Endothelial cell of umbilical vein (primary cell): ENCODE measurements at regions of chr9 and their contacts with region 1.

Region 1: GRCh38 chr9:134443168-134444037 is 117.1 kb downstream of the RXRA start:
- DNase-seq: peak; percentile 70
- H3K4me3 ChIP-seq: no peak overlapping the region
- H3K27ac ChIP-seq: no peak overlapping the region
- H3K4me1 ChIP-seq: peaks cover 6% of the 10 kb centered on the region
- H3K27me3 ChIP-seq: peaks cover 0 to 4% of the 10 kb centered on the region in 2 experiments
- CTCF ChIP-seq: peak; percentile 98 to 99
- POLR2A ChIP-seq: no peak

Region 2: DNA sequence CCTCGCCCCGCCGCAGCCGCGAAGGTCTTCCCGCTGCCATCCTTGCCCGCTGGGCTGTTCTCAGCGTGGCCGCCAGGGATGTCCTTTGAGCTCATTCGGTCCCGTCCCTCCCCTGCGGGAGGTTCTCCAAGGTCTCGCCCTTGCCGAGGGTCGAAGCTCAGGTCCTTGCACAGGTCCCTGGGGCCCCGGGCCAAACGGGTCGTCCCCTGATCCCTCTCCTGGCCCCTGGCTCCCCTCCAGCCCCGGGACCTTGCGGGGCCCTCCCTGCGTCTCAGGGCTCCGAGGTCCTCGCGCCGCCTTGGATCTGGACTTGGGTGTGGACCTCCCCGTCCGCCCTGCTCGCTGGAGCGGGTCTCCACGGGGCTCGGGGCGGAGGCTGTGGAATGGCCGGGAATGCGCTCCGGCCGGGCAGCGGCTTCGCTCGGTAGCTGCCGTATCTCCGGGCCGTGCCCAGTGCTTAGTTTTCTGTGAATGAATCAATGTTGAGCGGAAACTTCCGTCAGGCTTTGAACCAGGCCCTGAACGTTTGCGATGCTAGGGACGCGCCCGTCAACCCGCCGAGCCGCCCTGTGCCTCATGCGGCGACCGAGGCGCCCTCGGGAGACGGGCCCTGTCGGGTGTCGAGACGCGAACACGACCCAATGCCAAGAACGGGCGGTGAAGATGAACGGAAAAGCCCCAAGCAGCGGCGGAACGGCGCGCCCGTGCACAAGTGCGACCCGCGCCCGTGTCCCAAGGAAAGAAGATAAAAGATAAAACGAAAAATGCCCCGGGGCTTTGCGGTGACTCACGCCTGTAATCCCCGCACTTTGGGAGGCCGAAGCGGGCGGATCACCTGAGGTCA is 279.8 kb before region 1 on chr9:
- CTCF ChIA-PET with region 1: interaction called, 133 read pairs
- POLR2A ChIA-PET with region 1: interaction called, 4 read pairs
- dilution Hi-C with region 1: no loop called
- intact Hi-C with region 1: no loop called
- DNase-seq: peak; percentile 62
- H3K4me3 ChIP-seq: peak overlapping the region; percentile 6 to 30 (median 25)
- H3K27ac ChIP-seq: peak overlapping the region; percentile 35
- H3K4me1 ChIP-seq: peaks cover 4% of the 10 kb centered on the region
- H3K27me3 ChIP-seq: no peaks in the 10 kb centered on the region
- CTCF ChIP-seq: peak; percentile 34 to 68
- POLR2A ChIP-seq: no peak

Region 3: DNA sequence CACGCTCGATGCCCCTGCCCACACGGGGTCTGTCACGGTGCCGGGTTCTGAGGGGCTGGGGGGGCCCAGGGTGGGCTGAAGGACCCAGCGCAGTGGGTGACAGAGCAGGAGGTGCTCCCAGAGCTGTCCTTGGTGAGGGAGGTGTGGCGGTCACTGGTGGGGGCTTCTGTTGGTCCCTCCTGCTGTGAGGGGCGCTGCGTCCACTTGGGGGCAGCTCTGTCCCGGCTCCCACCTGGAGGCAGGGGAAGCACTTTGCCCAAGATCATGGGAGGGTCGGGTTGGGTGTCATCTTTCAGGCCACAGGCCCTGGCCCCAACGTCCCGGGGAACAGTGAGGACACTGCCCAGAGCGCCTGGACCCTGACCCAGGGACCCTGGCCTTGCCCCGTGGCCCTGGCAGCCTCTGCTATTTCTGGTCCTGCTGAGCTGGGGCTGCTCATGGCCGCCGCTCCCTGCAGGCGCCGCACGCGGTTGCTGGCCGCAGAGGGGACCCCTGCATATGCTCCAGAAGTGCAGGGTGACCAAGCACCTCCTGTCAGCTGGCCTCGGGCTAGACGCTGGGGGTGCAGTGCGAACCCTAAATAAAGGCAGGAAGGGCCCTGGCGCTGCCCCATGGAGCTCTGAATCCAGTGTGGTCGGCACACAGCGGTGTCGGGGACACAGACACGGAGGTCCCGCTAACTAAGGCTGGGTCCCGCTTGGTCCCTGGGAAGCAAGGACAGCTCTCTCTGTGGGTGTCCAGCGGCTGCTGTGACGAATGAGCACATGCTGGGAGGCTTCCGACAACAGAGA is 267.4 kb before region 1 on chr9:
- CTCF ChIA-PET with region 1: interaction called, 133 read pairs
- POLR2A ChIA-PET with region 1: interaction called, 5 read pairs
- dilution Hi-C with region 1: no loop called
- intact Hi-C with region 1: no loop called
- DNase-seq: no peak
- H3K4me3 ChIP-seq: no peak overlapping the region
- H3K27ac ChIP-seq: no peak overlapping the region
- H3K4me1 ChIP-seq: no peaks in the 10 kb centered on the region
- H3K27me3 ChIP-seq: peaks cover 2 to 3% of the 10 kb centered on the region in 2 experiments
- CTCF ChIP-seq: no peak
- POLR2A ChIP-seq: no peak

Region 4: GRCh38 chr9:134325817-134326723 is 117.3 kb before region 1 on chr9 and contains the start of gene RXRA:
- CTCF ChIA-PET with region 1: interaction called, 12 read pairs
- POLR2A ChIA-PET with region 1: no interaction called
- dilution Hi-C with region 1: no loop called
- intact Hi-C with region 1: loop called (anchors 1 kb)
- DNase-seq: peak; percentile 56
- H3K4me3 ChIP-seq: peak within 1 kb of the TSS; percentile 59 to 84 (median 75)
- H3K27ac ChIP-seq: peak within 1 kb of the TSS; percentile 82
- H3K4me1 ChIP-seq: peaks cover 21% of the 10 kb centered on the region
- H3K27me3 ChIP-seq: no peaks in the 10 kb centered on the region
- CTCF ChIP-seq: no peak
- POLR2A ChIP-seq: peak; percentile 80
- total RNA-seq, gene RXRA: 37.4 and 38.9 TPM in 2 replicates

Region 5: GRCh38 chr9:134381671-134382516 is 61.5 kb before region 1 on chr9:
- CTCF ChIA-PET with region 1: interaction called, 10 read pairs
- POLR2A ChIA-PET with region 1: interaction called, 3 read pairs
- dilution Hi-C with region 1: no loop called
- intact Hi-C with region 1: no loop called
- DNase-seq: peak; percentile 42
- H3K4me3 ChIP-seq: no peak overlapping the region
- H3K27ac ChIP-seq: no peak overlapping the region
- H3K4me1 ChIP-seq: peaks cover 24% of the 10 kb centered on the region
- H3K27me3 ChIP-seq: no peaks in the 10 kb centered on the region
- CTCF ChIP-seq: peak; percentile 21 to 45
- POLR2A ChIP-seq: no peak

Region 6: DNA sequence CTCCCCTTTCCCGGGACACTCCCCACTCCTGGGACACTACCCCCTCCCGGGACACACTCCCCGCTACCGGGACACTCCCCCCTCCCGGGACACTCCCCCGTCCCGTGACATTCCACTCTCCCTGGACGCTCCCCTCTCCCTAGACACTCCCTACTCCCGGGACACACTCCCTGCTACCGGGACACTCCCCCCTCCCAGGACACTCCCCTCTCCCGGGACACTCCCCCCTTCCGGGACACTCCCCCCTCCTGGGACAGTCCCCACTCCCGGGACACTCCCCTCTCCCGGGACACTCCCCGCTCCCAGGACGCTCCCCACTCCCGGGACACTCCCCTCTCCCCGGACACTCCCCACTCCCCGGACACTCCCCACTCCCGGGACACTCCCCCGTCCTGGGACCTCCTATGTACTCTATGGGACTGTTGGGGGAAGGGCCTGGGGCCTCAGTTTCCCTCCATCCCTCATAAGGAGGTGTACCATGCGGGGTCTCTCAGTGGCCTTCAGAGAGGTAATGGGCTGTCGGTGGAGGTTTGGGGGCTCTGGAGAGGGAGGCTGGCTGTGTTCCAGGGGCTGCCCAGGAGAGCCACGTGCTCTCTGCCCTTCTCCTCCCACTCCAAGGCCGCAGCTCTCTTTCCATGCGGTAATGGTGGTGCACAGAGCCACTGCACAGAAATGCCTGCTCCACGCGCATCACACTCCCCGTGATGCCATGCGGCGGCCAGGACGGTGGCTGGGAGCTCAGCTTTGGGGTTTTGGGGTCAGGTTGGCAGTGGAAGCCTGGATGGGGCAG is 20.9 kb before region 1 on chr9:
- CTCF ChIA-PET with region 1: no interaction called
- POLR2A ChIA-PET with region 1: no interaction called
- dilution Hi-C with region 1: no loop called
- intact Hi-C with region 1: no loop called
- DNase-seq: no peak
- H3K4me3 ChIP-seq: no peak overlapping the region
- H3K27ac ChIP-seq: no peak overlapping the region
- H3K4me1 ChIP-seq: no peaks in the 10 kb centered on the region
- H3K27me3 ChIP-seq: no peaks in the 10 kb centered on the region
- CTCF ChIP-seq: no peak
- POLR2A ChIP-seq: no peak

Region 7: DNA sequence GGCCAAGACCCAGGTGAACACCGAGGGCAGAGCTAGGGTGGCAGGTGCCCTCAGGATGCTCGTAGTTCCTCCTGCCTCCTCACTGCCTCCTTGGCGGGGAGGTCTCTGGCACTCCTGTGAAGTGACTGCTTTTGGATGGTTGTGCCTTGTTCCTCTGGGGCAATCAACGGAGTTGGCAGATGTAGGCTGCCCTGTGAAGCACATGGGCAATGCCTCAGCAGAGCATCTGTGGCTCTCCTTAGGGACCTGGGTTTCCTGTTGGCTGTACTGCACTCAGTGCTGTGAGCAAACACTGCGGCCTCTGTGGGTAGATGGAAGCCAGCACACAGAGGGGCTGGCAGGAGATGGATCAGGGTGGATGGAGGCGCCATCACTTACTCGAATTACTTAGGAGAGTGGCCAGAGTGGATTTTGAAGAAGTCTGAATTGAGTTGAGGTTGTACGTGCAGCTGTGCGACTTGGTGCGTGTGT is 126.8 kb after region 1 on chr9:
- CTCF ChIA-PET with region 1: no interaction called
- POLR2A ChIA-PET with region 1: no interaction called
- dilution Hi-C with region 1: no loop called
- intact Hi-C with region 1: no loop called
- DNase-seq: no peak
- H3K4me3 ChIP-seq: no peak overlapping the region
- H3K27ac ChIP-seq: no peak overlapping the region
- H3K4me1 ChIP-seq: no peaks in the 10 kb centered on the region
- H3K27me3 ChIP-seq: no peaks in the 10 kb centered on the region
- CTCF ChIP-seq: no peak
- POLR2A ChIP-seq: no peak

Region 8: DNA sequence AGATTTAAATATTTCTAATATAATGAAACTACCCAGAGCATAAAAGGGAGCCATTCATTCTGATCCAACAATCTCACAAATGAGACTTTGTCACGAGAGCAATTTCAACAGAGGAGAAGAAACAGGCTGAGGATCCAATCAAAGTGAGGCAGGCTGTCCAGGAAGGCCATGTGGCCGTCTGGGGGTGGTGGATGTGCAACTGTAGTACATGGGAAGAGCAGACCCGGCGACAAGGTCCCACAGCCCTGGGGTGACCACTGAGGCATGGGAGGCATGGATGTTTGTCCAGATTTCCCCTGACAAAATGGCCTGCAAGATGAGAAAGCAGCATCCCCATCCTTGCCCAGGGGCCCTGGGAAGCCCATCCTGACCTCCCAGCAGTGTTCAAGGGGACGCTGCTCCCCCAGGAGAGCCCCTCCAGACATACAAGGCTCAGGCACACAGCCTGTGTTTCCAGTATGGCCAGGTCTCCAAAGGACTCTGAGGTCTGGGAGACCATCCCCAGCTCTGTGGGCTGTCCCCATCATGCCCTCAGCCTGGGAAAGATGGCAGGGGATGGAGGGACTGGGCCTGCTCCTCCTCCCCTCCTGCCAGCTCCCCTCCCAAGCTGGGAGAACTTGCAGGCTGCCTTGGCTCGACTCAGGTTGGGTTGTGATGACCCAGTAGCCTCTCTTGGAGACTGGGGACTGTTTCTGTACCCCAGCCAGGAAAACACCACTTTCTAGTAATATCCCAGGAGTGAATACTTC is 409.7 kb after region 1 on chr9:
- CTCF ChIA-PET with region 1: no interaction called
- POLR2A ChIA-PET with region 1: no interaction called
- dilution Hi-C with region 1: no loop called
- intact Hi-C with region 1: no loop called
- DNase-seq: no peak
- H3K4me3 ChIP-seq: no peak overlapping the region
- H3K27ac ChIP-seq: no peak overlapping the region
- H3K4me1 ChIP-seq: no peaks in the 10 kb centered on the region
- H3K27me3 ChIP-seq: no peaks in the 10 kb centered on the region
- CTCF ChIP-seq: no peak
- POLR2A ChIP-seq: no peak

Region 9: GRCh38 chr9:136093995-136094881 is 1650.8 kb after region 1 on chr9:
- CTCF ChIA-PET with region 1: no interaction called
- POLR2A ChIA-PET with region 1: no interaction called
- dilution Hi-C with region 1: no loop called
- intact Hi-C with region 1: loop called (anchors 5 kb)
- DNase-seq: peak; percentile 33
- H3K4me3 ChIP-seq: peak overlapping the region; percentile 58 to 86 (median 68)
- H3K27ac ChIP-seq: peak overlapping the region; percentile 64
- H3K4me1 ChIP-seq: peaks cover 19% of the 10 kb centered on the region
- H3K27me3 ChIP-seq: no peaks in the 10 kb centered on the region
- CTCF ChIP-seq: no peak
- POLR2A ChIP-seq: peak; percentile 17